HepG2 (cell line): ENCODE measurements at regions of chr14 and their contacts with region 1.

Region 1: GRCh38 chr14:75522224-75522982 is at the start of gene BATF:
- DNase-seq: no peak
- ATAC-seq: no peak
- H3K4me3 ChIP-seq: peak within 1 kb of the TSS in 1 of 3 experiments; percentile 4; a peak in 1 of 6 replicates
- H3K27ac ChIP-seq: no peak within 1 kb of the TSS
- H3K4me1 ChIP-seq: peaks cover 33% of the 10 kb centered on the region
- H3K27me3 ChIP-seq: peaks cover 0 to 2% of the 10 kb centered on the region in 2 experiments; a peak in 2 of 5 replicates
- CTCF ChIP-seq: no peak
- EP300 ChIP-seq: no peak
- POLR2A ChIP-seq: no peak
- RAD21 ChIP-seq: no peak
- total RNA-seq, gene BATF: 0.22 and 0.44 TPM in 2 replicates

Region 2: DNA sequence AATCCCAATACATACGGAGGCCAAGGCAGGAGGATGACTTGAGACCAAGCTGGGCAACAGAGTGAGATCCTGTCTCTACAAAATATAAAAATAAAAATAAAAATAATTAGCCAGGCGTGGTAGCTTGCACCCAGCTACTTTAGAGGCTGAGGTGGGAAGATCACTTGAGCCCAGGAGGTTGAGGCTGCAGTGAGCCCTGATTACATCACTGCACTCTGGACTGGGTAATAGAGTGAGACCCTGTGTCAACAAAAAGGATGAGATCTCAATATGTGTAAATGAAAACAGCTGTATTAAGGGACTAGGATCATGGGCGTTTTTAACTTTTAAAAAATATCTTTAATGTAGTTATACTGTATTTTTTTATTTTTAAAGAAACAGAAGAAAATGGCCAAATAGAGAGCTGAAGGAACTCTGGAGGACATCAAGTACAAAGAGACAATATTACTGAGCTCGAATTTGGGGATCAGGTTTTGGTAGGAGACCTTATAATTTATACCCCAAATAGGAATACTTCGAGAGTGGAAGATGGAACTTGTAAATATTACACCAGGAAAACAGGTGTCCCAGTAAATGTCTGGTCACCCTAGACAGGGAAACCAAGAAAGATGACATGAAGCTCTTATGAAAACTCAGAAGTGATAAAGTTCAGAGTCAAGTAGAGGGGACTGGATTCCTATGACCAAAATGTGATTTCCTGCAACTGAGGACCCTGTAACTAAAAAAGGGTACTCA is 12.9 kb after region 1 on chr14:
- CTCF ChIA-PET with region 1: no interaction called
- POLR2A ChIA-PET with region 1: interaction called, 19 read pairs
- in situ Hi-C with region 1: no loop called
- intact Hi-C with region 1: no loop called
- DNase-seq: peak; percentile 31
- ATAC-seq: no peak
- H3K4me3 ChIP-seq: no peak overlapping the region
- H3K27ac ChIP-seq: peak overlapping the region; percentile 64
- H3K4me1 ChIP-seq: peaks cover 57% of the 10 kb centered on the region
- H3K27me3 ChIP-seq: no peaks in the 10 kb centered on the region
- CTCF ChIP-seq: no peak
- EP300 ChIP-seq: no peak
- POLR2A ChIP-seq: no peak
- RAD21 ChIP-seq: no peak

Region 3: DNA sequence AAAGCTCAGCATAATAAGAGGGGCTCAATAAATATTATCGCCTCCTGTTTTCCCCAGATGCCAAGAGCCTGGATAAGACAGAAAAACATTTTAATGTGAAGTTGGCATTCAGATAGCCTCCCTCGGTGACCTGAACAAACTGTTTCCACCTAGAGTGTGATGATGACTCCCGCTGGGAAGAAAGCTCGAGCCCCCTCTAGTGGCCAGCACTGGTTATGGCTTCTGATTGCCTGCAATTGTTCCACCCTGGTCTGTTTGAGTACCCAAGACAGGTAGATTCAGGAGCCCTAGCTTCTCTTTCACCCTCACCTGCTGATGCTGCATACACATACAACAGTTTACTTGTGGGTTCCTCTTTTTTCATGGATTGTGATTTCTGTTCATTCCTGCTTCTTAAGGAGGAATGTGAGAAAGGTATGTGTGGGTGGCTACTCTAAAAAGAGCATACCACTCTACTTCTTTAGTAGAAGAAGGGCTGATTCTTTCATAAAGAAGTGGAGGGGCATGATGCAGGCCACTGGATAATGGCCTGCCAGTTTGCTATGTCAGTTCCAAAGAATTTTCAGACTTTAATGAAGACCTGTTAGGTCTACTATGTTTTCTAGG is 131.8 kb after region 1 on chr14:
- CTCF ChIA-PET with region 1: no interaction called
- POLR2A ChIA-PET with region 1: no interaction called
- in situ Hi-C with region 1: no loop called
- intact Hi-C with region 1: loop called (anchors 1 kb)
- DNase-seq: peak; percentile 60
- ATAC-seq: peak; percentile 58
- H3K4me3 ChIP-seq: no peak overlapping the region
- H3K27ac ChIP-seq: no peak overlapping the region
- H3K4me1 ChIP-seq: peaks cover 67% of the 10 kb centered on the region
- H3K27me3 ChIP-seq: no peaks in the 10 kb centered on the region
- CTCF ChIP-seq: peak; percentile 93
- EP300 ChIP-seq: 0 out of 4 replicates have a peak, but pooled peaks of 1 of the 2 experiments have one; percentile 3
- POLR2A ChIP-seq: no peak
- RAD21 ChIP-seq: peak; percentile 94